ENCODE measurements at regions of chr2 and their contacts with region 1.

Region 1: GRCh38 chr2:73685770-73686438 is 43.7 kb upstream of the NAT8 start:
- DNase-seq: peak; percentile 72
- H3K4me3 ChIP-seq: no peak overlapping the region
- H3K27ac ChIP-seq: no peak overlapping the region
- H3K4me1 ChIP-seq: no peaks in the 10 kb centered on the region
- H3K27me3 ChIP-seq: no peaks in the 10 kb centered on the region
- CTCF ChIP-seq: no peak

Region 2: DNA sequence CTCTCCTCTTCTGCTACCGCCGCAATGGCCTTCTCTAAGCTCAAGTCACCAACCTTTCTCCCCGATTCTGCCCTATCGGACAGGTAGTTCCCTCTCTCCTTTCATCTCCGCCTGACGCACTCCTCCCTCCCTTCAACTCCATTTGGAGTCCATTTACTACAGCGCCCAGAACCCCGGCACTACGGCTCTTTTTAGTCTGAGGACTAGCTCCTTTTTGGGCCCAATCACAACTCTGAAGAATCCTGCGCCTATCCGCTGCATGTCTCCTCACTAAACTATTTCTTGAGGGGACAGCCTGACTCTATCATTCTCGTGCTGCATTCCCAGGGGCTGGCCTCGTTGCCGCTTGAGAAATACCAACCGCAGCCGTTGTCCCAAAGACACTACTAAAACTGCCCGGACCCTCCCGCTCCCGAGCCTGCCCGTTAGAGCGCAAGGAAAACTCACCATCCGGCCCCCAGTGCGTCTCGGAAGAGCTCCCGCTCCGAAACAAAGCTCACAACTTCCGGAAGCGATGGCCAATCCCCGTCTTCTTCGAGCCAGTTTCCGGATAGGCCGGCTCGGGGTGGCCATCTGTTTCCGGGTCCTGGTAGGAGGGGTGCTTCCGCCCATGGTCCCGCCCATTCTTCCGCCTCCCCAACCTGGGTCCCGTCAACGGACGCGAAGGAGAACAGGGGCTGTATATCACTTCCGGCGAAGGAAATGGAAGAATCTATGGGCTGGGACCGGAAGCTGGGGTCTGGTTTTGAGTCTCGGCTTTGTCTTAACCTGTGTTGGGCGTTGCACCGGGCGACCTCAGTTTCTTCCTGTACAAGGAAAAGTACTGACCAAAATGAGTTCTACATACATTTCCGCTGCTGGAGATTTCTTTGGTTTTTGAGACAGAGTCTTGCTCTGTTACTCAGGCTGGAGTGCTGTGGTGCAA is 51.2 kb after region 1 on chr2 and contains the start of gene TPRKB:
- intact Hi-C with region 1: loop called (anchors 10 kb)
- DNase-seq: peak; percentile 96
- H3K4me3 ChIP-seq: peak within 1 kb of the TSS; percentile 79
- H3K27ac ChIP-seq: peak within 1 kb of the TSS; percentile 61
- H3K4me1 ChIP-seq: no peaks in the 10 kb centered on the region
- H3K27me3 ChIP-seq: no peaks in the 10 kb centered on the region
- CTCF ChIP-seq: no peak
- total RNA-seq, gene TPRKB: 28.2 to 37.5 TPM

Region 3: DNA sequence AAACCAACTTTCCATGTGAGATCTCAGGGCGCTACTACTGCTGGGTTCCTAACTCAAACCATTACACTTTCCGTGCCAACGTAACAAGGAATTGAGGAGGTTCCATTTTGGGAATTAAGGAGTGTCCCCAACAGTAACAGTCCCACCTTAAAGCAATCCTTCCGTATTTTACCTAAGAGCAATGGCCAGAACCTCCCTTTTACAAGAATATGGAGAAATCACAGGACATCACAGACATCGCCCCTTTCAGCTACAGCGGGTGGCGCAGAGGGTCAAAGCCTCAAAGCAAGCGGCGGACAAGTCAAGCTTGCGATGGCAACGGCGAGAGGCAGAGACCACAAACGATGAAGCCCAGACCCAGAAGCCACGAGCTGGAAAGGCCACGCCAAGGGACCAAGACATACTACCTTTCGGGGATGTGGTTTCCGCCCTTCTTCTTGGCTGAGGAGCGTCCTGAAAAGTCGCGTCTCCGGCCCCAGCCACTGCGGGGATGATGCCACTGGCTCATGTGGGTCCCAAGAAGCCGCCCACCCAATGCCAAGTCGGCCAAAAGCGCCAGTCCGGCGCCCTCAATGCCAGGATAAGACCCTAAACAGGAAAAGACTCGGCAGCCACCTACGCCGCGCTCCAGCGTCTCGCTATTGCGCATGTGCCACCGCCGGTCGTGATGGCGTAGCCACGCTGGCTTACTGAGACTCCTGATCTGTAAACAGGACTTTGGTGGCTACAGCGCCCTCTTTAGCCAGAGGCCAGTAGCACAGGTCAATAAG is 93.7 kb after region 1 on chr2 and contains the start of gene DUSP11:
- intact Hi-C with region 1: loop called (anchors 10 kb)
- DNase-seq: peak; percentile 99
- H3K4me3 ChIP-seq: peak within 1 kb of the TSS; percentile 89
- H3K27ac ChIP-seq: peak within 1 kb of the TSS; percentile 86
- H3K4me1 ChIP-seq: peaks cover 11% of the 10 kb centered on the region
- H3K27me3 ChIP-seq: no peaks in the 10 kb centered on the region
- CTCF ChIP-seq: peak; percentile 80
- total RNA-seq, gene DUSP11: 19.1 to 19.2 TPM

Region 4: DNA sequence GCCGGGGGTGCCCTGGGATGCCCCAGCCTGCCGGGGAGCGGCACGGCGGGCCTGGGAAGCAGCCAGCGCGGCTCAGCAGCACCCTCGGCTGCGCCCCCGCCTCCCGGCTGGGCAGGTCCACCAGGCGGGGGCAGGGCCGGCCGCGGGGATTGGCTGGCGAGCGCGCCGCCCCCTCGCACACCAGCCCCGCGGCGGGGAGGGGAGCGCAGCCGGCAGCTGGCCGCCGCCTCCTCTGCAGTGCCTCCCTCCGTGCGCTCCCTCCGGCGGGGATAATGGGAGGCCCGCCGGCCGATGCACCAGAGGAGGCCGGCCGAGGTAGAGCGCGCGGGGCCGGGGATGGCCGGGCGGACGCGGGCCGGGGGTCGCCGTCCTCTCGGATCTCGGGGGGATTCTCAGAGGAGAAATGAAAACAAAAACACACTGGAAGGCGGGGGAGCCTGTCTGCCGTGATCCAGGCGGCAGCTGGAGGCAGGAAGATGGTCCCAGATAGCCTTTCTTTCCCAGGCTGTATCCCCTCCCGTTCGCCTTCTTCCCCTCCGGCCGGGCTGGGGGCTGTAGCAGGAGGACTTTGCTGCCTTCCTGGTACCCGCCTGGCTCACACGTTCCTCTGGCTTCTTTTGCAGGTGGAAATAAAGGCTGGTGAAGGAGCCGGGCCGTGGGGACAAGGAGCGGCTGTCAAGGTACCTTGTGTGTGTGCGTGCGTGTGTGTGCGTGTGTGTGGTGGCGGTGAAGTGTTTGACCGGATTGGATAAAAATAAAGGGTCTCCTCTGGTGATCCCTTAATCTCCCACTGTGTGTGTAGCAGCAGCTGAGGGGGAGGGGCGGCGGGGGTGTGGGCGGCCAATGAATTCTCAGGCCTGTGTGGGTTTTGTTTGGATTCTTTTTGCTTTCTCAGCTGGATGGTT is 316.8 kb after region 1 on chr2:
- intact Hi-C with region 1: no loop called
- DNase-seq: peak; percentile 79
- H3K4me3 ChIP-seq: peak overlapping the region; percentile 51
- H3K27ac ChIP-seq: no peak overlapping the region
- H3K4me1 ChIP-seq: peaks cover 10% of the 10 kb centered on the region
- H3K27me3 ChIP-seq: no peaks in the 10 kb centered on the region
- CTCF ChIP-seq: no peak

Measured in colonic mucosa (tissue), 4 donors.